PC-9 (cell line): ENCODE measurements at regions of chr10 and their contacts with region 1.

Region 1: GRCh38 chr10:63322962-63323361 is 142.8 kb downstream of the JMJD1C start:
- DNase-seq: no peak
- H3K4me3 ChIP-seq: no peak overlapping the region
- H3K27ac ChIP-seq: no peak overlapping the region
- H3K4me1 ChIP-seq: no peaks in the 10 kb centered on the region
- H3K27me3 ChIP-seq: no peaks in the 10 kb centered on the region
- CTCF ChIP-seq: no peak

Region 2: DNA sequence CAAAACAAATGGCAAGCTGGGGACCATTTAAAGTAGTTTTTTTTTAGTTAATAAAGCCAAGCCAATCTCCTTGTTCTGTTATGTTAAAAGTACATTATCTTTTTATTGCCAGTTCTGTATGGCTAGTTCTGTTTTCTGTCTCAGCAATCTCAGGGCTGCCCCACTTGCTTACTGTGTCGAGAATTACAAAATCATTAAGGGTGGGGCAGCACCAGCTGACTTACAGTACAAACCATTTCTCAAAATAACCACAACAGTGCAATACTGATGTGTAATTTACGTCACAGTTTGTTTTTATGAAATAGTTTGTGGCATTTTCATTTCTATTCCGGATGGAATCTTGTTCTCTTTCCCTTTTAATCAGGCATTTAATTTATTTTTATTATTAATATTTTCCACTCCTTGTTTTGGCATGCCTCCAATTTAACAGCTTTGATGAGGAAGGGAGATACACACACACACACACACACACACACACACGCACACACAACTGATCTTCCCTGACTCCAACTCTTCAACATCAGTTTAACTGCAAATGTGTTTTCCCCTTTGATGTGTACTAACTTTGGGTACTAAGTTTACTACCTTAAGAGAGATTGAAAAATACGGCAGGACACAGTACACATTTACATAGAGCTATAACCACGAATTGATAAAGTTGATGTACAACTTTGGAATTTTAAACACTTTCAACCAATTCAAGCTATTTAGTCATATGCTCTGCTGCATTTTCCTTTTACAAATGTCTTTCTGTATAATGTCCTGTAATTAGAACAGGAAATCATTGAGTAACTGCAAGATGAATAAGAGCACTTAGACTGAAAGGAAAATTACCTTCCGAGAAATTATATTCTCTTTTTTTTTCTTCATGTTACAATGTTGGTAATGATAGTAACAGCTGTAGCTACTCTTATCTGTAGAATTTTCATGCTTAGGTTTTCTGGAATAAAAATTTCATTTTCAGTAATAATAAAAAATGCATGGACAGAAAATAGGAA is 1330.0 kb before region 1 on chr10:
- CTCF ChIA-PET with region 1: interaction called, 19 read pairs
- POLR2A ChIA-PET with region 1: no interaction called
- intact Hi-C with region 1: no loop called
- DNase-seq: no peak
- H3K4me3 ChIP-seq: no peak overlapping the region
- H3K27ac ChIP-seq: no peak overlapping the region
- H3K4me1 ChIP-seq: peaks cover 6% of the 10 kb centered on the region
- H3K27me3 ChIP-seq: no peaks in the 10 kb centered on the region
- CTCF ChIP-seq: no peak

Region 3: DNA sequence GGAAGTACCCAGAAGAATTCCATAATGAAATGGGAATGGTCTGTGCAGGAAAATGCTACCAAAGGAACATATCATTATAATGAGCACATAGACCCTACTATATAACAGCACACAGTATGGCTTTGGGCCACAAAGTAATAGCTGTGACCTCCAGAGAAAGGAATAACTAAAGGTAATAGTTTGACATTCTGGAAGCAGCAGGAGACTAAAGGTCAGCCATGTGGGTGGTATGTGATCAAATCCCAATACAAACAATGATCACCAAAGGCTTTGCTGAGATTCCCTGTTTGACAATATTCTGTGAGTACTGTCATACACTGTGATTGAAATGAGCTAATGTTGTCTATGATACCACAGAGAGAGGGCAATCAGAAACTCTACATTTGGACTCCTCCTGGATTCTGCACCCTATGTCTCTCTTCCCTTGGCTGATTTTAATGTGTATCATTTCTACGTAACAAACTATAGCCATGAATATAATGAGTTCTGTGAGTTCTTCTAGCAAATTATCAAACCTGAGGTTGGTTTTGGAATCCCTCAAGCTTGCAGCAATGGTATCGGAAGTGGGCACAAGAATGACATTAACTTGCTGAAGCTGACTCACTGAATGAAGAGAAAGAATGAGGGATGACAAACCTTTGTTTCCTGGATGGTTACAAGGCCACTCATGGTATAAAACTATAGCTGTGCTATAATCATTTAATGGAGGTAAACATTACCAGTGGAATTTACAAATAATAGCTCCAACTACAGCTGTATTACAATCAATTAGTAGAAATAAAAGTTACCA is 43.2 kb after region 1 on chr10:
- CTCF ChIA-PET with region 1: no interaction called
- POLR2A ChIA-PET with region 1: no interaction called
- intact Hi-C with region 1: no loop called
- DNase-seq: no peak
- H3K4me3 ChIP-seq: no peak overlapping the region
- H3K27ac ChIP-seq: no peak overlapping the region
- H3K4me1 ChIP-seq: no peaks in the 10 kb centered on the region
- H3K27me3 ChIP-seq: no peaks in the 10 kb centered on the region
- CTCF ChIP-seq: no peak